Mammary epithelial cell (primary cell): ENCODE measurements at regions of chr15 and their contacts with region 1.

Region 1: GRCh38 chr15:38809621-38810020 is 245.0 kb upstream of the RASGRP1 start:
- DNase-seq: no peak
- H3K4me3 ChIP-seq: no peak overlapping the region
- H3K27ac ChIP-seq: no peak overlapping the region
- H3K4me1 ChIP-seq: no peaks in the 10 kb centered on the region
- H3K27me3 ChIP-seq: peaks cover 2% of the 10 kb centered on the region
- CTCF ChIP-seq: no peak

Region 2: GRCh38 chr15:38758043-38758442 is 51.6 kb before region 1 on chr15:
- CTCF ChIA-PET with region 1: no interaction called
- dilution Hi-C with region 1: loop called (anchors 5 kb)
- in situ Hi-C with region 1: no loop called
- intact Hi-C with region 1: no loop called
- DNase-seq: no peak
- H3K4me3 ChIP-seq: no peak overlapping the region
- H3K27ac ChIP-seq: no peak overlapping the region
- H3K4me1 ChIP-seq: no peaks in the 10 kb centered on the region
- H3K27me3 ChIP-seq: no peaks in the 10 kb centered on the region
- CTCF ChIP-seq: no peak

Region 3: DNA sequence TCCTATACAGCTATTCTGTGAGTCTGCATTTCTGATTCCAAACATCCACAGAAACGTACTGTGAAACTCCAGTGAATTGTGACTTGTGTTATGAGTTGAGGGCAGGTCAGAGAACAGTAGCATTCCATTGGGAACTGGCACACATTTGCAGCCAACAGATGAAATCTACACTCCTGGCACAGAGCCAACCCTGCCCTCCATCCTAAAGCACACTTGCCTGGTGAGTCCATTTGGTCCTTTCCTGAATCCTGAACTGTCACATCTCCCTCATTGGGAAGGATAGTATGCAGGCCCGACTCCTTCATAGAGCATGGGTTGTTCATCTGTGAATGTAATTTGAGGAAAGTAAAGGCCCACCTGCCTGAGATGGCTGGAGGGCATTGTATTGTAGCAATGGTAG is 69.3 kb after region 1 on chr15:
- CTCF ChIA-PET with region 1: no interaction called
- dilution Hi-C with region 1: no loop called
- in situ Hi-C with region 1: no loop called
- intact Hi-C with region 1: no loop called
- DNase-seq: no peak
- H3K4me3 ChIP-seq: no peak overlapping the region
- H3K27ac ChIP-seq: no peak overlapping the region
- H3K4me1 ChIP-seq: no peaks in the 10 kb centered on the region
- H3K27me3 ChIP-seq: no peaks in the 10 kb centered on the region
- CTCF ChIP-seq: no peak

Region 4: GRCh38 chr15:38904298-38904697 is 94.7 kb after region 1 on chr15:
- CTCF ChIA-PET with region 1: no interaction called
- dilution Hi-C with region 1: loop called (anchors 5 kb)
- in situ Hi-C with region 1: no loop called
- intact Hi-C with region 1: no loop called
- DNase-seq: no peak
- H3K4me3 ChIP-seq: no peak overlapping the region
- H3K27ac ChIP-seq: no peak overlapping the region
- H3K4me1 ChIP-seq: peaks cover 5% of the 10 kb centered on the region
- H3K27me3 ChIP-seq: no peaks in the 10 kb centered on the region
- CTCF ChIP-seq: no peak